ENCODE measurements at regions of chr17 and their contacts with region 1.

Region 1: GRCh38 chr17:44363613-44364159 is at the start of gene FAM171A2:
- DNase-seq: peak; percentile 64
- ATAC-seq: peak; percentile 91
- H3K4me3 Mint-ChIP-seq: peak within 1 kb of the TSS; percentile 66
- H3K27ac Mint-ChIP-seq: no peak within 1 kb of the TSS
- H3K4me1 Mint-ChIP-seq: peaks cover 2% of the 10 kb centered on the region
- H3K27me3 Mint-ChIP-seq: peaks cover 12% of the 10 kb centered on the region
- CTCF ChIP-seq: peak; percentile 95
- total RNA-seq, gene FAM171A2: 0.43 to 0.78 TPM

Region 2: DNA sequence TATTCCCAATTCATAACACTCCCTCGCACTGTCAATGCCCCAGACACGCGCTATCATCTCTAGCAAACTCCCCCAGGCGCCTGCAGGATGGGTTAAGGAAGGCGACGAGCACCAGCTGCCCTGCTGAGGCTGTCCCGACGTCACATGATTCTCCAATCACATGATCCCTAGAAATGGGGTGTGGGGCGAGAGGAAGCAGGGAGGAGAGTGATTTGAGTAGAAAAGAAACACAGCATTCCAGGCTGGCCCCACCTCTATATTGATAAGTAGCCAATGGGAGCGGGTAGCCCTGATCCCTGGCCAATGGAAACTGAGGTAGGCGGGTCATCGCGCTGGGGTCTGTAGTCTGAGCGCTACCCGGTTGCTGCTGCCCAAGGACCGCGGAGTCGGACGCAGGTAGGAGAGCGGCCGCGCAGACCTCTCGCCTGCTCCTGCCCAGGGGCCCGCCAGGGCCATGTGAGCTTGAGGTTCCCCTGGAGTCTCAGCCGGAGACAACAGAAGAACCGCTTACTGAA is 18.7 kb before region 1 on chr17 and contains the start of gene GRN:
- CTCF ChIA-PET with region 1: interaction called, 51 read pairs
- POLR2A ChIA-PET with region 1: no interaction called
- intact Hi-C with region 1: no loop called
- DNase-seq: peak; percentile 95
- ATAC-seq: peak; percentile 99
- H3K4me3 Mint-ChIP-seq: peak within 1 kb of the TSS; percentile 93
- H3K27ac Mint-ChIP-seq: peak within 1 kb of the TSS; percentile 81
- H3K4me1 Mint-ChIP-seq: peaks cover 19% of the 10 kb centered on the region
- H3K27me3 Mint-ChIP-seq: no peaks in the 10 kb centered on the region
- CTCF ChIP-seq: no peak
- total RNA-seq, gene GRN: 34.8 to 35.5 TPM

Region 3: GRCh38 chr17:44350733-44351226 is 12.9 kb before region 1 on chr17:
- CTCF ChIA-PET with region 1: interaction called, 51 read pairs
- POLR2A ChIA-PET with region 1: no interaction called
- intact Hi-C with region 1: no loop called
- DNase-seq: peak; percentile 86
- ATAC-seq: peak; percentile 90
- H3K4me3 Mint-ChIP-seq: no peak overlapping the region
- H3K27ac Mint-ChIP-seq: no peak overlapping the region
- H3K4me1 Mint-ChIP-seq: peaks cover 11% of the 10 kb centered on the region
- H3K27me3 Mint-ChIP-seq: no peaks in the 10 kb centered on the region
- CTCF ChIP-seq: peak; percentile 80

Region 4: DNA sequence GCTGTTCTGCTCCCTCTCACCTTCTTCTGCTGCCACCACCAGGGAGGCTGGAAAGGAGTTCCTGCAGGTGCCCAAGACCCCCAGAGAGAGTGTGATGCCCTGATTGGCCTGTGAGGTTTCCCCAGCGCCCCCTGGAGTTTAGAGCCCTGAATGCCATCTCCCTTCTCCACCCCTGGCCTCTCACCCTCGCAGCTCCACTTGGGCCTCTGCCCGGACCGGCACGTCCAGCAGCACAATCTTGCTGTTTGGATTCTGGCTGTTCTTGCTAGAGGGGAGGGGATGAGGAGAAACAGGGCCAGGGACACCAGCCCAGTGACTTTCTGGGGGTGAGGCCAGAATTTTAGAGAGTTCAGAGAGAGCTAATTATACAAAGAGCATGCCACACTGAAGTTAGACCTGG is 12.4 kb after region 1 on chr17:
- CTCF ChIA-PET with region 1: interaction called, 39 read pairs
- POLR2A ChIA-PET with region 1: no interaction called
- intact Hi-C with region 1: no loop called
- DNase-seq: peak; percentile 58
- ATAC-seq: peak; percentile 49
- H3K4me3 Mint-ChIP-seq: no peak overlapping the region
- H3K27ac Mint-ChIP-seq: no peak overlapping the region
- H3K4me1 Mint-ChIP-seq: no peaks in the 10 kb centered on the region
- H3K27me3 Mint-ChIP-seq: peaks cover 9% of the 10 kb centered on the region
- CTCF ChIP-seq: peak; percentile 49

Region 5: GRCh38 chr17:44543213-44543904 is 179.7 kb after region 1 on chr17:
- CTCF ChIA-PET with region 1: no interaction called
- POLR2A ChIA-PET with region 1: no interaction called
- intact Hi-C with region 1: no loop called
- DNase-seq: no peak
- ATAC-seq: no peak
- H3K4me3 Mint-ChIP-seq: no peak overlapping the region
- H3K27ac Mint-ChIP-seq: no peak overlapping the region
- H3K4me1 Mint-ChIP-seq: peaks cover 4% of the 10 kb centered on the region
- H3K27me3 Mint-ChIP-seq: peaks cover 24% of the 10 kb centered on the region
- CTCF ChIP-seq: no peak

Measured in activated CD8-positive, alpha-beta T cell treated with anti-CD3 and anti-CD28 coated beads for 36 hours (primary cell).